Ascending aorta (tissue), 2 donors: ENCODE measurements at regions of chr3 and their contacts with region 1.

Region 1: GRCh38 chr3:41961750-41962679 is at the start of gene ULK4:
- DNase-seq: peak; percentile 94 to 99
- H3K4me3 ChIP-seq: peak within 1 kb of the TSS; percentile 63 to 99
- H3K27ac ChIP-seq: peak within 1 kb of the TSS; percentile 73 to 89
- H3K4me1 ChIP-seq: peaks cover 0 to 9% of the 10 kb centered on the region in 2 donors
- H3K27me3 ChIP-seq: no peaks in the 10 kb centered on the region
- CTCF ChIP-seq: no peak
- total RNA-seq, gene ULK4: 4.2 TPM

Region 2: GRCh38 chr3:40309418-40309924 is 1652.5 kb before region 1 on chr3 and contains the start of gene EIF1B:
- intact Hi-C with region 1: loop called (anchors 1 kb)
- DNase-seq: peak; percentile 92 to 99
- H3K4me3 ChIP-seq: peak within 1 kb of the TSS; percentile 74
- H3K27ac ChIP-seq: peak within 1 kb of the TSS; percentile 84 to 97
- H3K4me1 ChIP-seq: peaks cover 4 to 19% of the 10 kb centered on the region in 2 donors
- H3K27me3 ChIP-seq: no peaks in the 10 kb centered on the region
- CTCF ChIP-seq: peak; percentile 79 to 89 (median 88)
- total RNA-seq, gene EIF1B: 21.7 TPM

Region 3: DNA sequence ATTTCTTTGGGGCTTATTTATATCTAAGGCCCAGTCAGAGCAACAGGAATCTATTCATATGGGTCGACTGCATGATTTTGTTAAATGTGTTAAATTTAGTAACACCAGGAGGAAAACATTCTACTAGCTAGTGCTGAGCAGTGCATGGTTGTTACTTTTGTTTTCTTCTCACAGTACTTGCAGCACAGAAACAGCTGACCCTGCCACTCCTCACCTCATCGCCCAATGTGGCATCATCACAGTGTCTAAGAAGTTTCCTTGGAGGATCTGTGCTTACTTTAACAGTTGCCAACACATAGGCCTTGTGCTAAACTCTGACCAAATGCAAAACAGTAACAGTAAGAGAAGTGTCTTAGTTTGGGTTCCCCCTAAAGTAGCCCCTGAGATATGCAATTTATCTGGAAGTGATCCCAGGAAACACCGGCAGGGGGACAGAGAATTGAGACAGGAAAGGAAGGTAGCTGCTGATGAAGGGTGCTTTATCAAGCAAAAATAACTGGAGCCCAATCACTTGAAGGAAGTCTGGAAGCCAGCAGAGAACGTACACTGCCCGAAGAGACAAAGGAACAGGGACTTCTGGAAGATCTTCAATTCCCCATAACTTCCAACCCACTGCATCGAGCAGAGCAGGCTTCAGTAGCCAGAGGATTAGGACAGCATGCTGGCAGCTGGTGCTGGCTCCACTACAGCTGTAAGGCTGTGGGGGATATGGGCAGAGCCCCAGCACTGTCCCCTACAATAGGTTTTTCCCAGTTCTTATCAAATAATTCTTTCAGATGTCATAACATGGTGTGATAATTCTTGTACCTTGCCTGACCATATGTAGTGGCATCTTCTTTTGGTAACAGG is 35.9 kb after region 1 on chr3:
- intact Hi-C with region 1: loop called (anchors 5 kb)
- DNase-seq: no peak
- H3K4me3 ChIP-seq: peak overlapping the region in 1 of 2 donors; percentile 15
- H3K27ac ChIP-seq: peak overlapping the region; percentile 38 to 67
- H3K4me1 ChIP-seq: peaks cover 7 to 17% of the 10 kb centered on the region in 2 donors
- H3K27me3 ChIP-seq: no peaks in the 10 kb centered on the region
- CTCF ChIP-seq: peak in 1 of 3 experiments; percentile 38

Region 4: DNA sequence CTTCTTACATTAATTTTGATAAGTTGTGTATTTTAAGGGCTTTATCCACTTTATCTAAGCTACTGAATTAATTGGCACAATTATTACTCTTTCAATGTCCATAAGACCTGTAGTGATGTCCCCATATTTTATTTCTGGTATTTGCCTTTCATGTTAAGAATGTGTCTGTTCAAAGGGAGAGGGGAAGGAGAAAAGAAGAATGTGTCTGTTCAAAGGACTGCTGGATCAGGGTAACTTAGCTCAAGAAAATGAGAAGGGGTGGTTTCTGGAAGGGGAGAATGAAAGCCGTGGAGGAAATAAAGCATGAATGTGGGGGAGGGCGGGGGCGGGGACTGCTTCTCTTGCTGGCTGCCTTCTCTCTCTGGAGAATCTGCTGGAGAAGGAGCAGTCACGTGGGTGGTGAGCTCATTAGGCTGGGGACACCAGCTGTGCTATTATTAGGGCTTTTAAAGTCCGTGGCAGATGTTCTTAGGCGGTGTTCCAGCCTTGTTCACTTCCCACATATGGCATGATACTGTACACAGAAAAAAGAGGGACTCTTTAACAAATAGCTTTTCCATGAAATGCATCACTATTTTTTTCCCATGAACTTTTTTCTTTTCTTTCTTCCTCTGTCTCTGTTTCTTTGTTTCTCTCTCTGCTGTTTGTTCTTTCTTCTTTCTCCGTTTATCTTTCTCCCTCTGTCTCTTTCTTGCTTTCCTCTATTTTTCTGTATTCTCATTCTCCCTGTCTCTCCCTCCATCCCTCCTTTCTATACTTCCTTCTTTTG is 63.5 kb after region 1 on chr3:
- intact Hi-C with region 1: loop called (anchors 5 kb)
- DNase-seq: peak; percentile 86 to 97
- H3K4me3 ChIP-seq: peak overlapping the region; percentile 13 to 39
- H3K27ac ChIP-seq: peak overlapping the region; percentile 71 to 88
- H3K4me1 ChIP-seq: peaks cover 11 to 34% of the 10 kb centered on the region in 2 donors
- H3K27me3 ChIP-seq: no peaks in the 10 kb centered on the region
- CTCF ChIP-seq: no peak

Region 5: DNA sequence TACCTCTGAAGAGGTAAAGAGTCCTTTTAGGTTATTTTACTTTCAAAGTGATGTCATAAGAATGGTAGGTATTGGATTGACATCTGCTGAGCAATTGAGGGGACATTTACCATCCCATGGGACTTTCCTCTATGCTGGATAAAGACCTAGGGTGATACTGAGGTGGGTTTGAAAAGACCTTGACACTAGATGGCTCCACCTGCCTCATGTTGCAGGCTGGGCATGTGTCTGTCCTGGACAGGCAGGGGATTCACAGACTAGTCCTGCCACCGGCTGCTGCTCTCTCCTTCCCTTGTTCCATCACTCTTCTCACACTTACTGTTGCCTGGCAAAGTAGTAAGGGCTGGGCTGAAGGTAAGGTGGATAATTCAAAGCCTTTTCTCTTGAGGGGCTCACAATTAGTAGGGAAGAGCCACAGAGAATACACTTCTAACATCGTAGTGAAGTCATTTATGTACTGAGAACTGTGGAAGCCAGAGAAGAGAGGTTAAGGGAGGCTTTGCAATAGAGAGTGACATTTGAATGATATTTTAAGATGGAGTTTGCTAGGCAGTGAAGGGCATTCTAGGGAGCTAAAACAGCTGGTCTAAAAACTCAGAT is 156.8 kb after region 1 on chr3:
- intact Hi-C with region 1: no loop called
- DNase-seq: peak in 1 of 2 donors; percentile 63
- H3K4me3 ChIP-seq: no peak overlapping the region
- H3K27ac ChIP-seq: peak overlapping the region; percentile 30 to 39
- H3K4me1 ChIP-seq: peaks cover 0 to 26% of the 10 kb centered on the region in 2 donors
- H3K27me3 ChIP-seq: no peaks in the 10 kb centered on the region
- CTCF ChIP-seq: peak in 1 of 3 experiments; percentile 18

Region 6: DNA sequence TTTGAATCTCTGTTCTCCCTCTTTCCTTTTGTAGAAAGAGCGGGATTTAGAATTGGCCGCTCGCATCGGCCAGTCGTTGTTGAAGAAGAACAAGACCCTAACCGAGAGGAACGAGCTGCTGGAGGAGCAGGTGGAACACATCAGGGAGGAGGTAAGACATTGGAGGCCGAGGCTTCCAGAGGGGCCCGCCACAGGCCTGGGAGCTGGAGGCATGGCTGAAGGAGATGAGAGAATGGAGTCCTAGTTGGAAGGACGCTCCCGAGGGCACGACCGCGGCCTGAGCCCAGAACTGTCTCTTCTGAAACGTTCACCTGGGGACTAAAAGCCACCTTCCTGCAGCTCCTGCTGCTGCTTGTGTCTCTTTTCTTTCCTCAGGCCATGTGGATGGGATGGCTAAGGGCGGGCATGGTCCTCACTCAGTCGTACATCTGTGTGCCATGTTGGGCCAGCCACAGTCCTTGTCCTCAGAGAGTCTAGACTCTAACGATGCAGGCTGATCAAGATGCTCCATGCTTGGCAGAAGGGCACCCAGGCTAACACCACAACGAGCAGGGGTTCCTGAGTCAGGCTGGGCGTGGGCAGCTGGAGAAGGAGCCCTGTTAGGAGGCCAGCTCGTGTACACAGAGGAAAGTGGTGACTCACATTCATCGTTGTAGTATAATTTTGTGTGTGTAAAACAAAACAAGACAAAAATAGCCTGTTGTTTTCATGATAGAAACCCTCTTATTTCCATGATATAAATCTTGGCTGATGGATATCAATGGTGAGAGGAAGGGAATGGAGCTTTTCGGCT is 222.8 kb after region 1 on chr3:
- intact Hi-C with region 1: loop called (anchors 5 kb)
- DNase-seq: peak in 1 of 2 donors; percentile 72
- H3K4me3 ChIP-seq: no peak overlapping the region
- H3K27ac ChIP-seq: peak overlapping the region in 1 of 2 donors; percentile 50
- H3K4me1 ChIP-seq: peaks cover 0 to 10% of the 10 kb centered on the region in 2 donors
- H3K27me3 ChIP-seq: no peaks in the 10 kb centered on the region
- CTCF ChIP-seq: no peak